Sigmoid colon (tissue), 7 donors: ENCODE measurements at regions of chr5 and their contacts with region 1.

Region 1: DNA sequence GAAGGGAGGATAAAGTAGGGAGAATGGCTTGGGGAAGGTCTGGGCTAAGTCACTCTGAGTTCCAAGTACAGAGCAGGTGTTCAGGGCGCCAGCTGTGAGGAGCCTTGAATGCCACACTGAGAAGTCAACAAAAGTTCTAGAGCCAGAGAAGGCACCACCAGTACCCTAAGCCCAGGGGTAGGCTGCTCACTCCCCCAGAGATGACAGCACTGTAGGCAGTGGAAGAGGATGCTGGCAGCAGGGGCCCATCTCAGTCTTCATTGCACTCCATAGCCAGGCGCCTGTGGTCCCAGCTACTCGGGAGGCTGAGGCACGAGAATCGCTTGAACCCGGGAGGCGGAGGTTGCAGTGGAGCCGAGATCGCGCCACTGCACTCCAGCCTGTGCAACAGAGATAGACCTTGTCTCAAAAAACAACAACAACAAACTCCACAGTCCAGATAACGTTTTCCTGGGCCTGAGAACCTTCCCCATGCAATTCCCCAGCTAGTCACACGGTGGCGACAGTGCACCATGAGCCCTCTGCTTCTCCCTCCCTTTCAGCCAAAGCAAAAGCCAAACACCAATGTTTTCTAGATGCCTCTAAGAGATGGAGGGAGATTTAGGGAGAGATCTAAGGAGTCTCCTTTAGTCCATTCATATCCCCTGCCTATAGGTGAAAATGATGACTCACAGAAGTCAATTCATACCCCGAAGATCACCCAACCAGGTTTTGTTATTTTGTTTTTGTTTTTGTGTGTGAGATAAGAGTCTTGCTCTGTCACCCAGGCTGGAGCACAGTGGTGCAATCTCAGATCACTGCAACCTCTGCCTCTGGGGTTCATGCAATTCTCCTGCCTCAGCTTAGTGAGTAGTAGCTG is 19.8 kb upstream of the NSD1 start:
- DNase-seq: peak; percentile 86
- H3K4me3 ChIP-seq: no peak overlapping the region
- H3K27ac ChIP-seq: no peak overlapping the region
- H3K4me1 ChIP-seq: peaks cover 2 to 20% (median 12%) of the 10 kb centered on the region in 4 donors
- H3K27me3 ChIP-seq: no peaks in the 10 kb centered on the region
- CTCF ChIP-seq: peak; percentile 97 to 98 (median 98)
- EP300 ChIP-seq: no peak
- POLR2A ChIP-seq: no peak

Region 2: DNA sequence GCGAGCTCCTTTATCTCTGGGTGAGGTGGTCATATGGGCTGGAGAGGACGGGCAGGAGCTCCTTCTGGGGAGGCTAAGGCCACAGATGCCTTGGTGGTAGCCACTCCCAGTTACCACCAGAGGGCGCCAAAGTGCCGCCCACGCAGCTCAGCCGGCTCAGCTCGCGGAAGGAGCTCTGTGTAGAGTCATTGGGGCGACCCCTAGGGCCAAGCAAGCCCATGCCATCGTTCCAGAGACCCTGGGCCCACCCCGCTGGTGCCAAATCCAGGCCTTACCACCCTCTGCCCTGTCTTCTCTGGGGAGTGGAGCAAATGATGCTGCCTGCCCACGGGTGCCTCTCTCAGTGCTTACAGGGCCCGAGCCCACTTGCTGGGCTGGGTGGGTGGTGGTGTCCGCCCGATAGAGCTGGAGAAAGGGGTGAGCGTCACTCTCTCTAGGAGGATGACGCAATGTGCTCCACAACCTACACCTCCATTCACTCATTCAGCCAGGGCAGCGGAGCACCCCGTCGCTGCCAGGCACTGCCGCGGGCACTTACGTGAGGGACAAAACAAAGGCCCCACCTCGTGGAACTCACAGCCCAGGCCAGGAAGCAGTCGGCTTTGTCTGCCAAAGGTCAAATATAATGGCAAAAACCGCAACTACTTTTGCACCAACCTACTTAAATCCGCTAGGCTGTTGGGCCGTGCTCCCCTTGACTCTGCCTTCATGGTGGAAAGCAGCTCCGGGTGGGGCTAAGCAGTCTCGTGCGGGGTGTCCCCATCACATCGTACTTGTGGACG is 452.7 kb before region 1 on chr5:
- intact Hi-C with region 1: loop called (anchors 5 kb)
- DNase-seq: peak; percentile 83
- H3K4me3 ChIP-seq: no peak overlapping the region
- H3K27ac ChIP-seq: no peak overlapping the region
- H3K4me1 ChIP-seq: peaks cover 0 to 17% (median 6%) of the 10 kb centered on the region in 4 donors
- H3K27me3 ChIP-seq: peaks cover 0 to 33% (median 16%) of the 10 kb centered on the region in 3 donors
- CTCF ChIP-seq: peak; percentile 50 to 98 (median 80)
- EP300 ChIP-seq: no peak
- POLR2A ChIP-seq: no peak

Region 3: GRCh38 chr5:177071666-177072385 is 42.0 kb before region 1 on chr5:
- intact Hi-C with region 1: loop called (anchors 1 kb)
- DNase-seq: peak; percentile 81
- H3K4me3 ChIP-seq: no peak overlapping the region
- H3K27ac ChIP-seq: no peak overlapping the region
- H3K4me1 ChIP-seq: peaks cover 0 to 3% (median 1%) of the 10 kb centered on the region in 4 donors
- H3K27me3 ChIP-seq: no peaks in the 10 kb centered on the region
- CTCF ChIP-seq: peak; percentile 50 to 93 (median 78)
- EP300 ChIP-seq: no peak
- POLR2A ChIP-seq: no peak

Region 4: GRCh38 chr5:177133091-177133852 is 19.5 kb after region 1 on chr5 and contains the start of gene NSD1:
- intact Hi-C with region 1: loop called (anchors 2 kb)
- DNase-seq: peak; percentile 96
- H3K4me3 ChIP-seq: peak within 1 kb of the TSS; percentile 57 to 86 (median 74)
- H3K27ac ChIP-seq: peak within 1 kb of the TSS; percentile 86 to 95 (median 93)
- H3K4me1 ChIP-seq: peaks cover 0 to 55% (median 47%) of the 10 kb centered on the region in 4 donors
- H3K27me3 ChIP-seq: no peaks in the 10 kb centered on the region
- CTCF ChIP-seq: no peak
- EP300 ChIP-seq: no peak
- POLR2A ChIP-seq: no peak
- total RNA-seq, gene NSD1: 34.6 to 41.5 (median 36.5) TPM

Region 5: DNA sequence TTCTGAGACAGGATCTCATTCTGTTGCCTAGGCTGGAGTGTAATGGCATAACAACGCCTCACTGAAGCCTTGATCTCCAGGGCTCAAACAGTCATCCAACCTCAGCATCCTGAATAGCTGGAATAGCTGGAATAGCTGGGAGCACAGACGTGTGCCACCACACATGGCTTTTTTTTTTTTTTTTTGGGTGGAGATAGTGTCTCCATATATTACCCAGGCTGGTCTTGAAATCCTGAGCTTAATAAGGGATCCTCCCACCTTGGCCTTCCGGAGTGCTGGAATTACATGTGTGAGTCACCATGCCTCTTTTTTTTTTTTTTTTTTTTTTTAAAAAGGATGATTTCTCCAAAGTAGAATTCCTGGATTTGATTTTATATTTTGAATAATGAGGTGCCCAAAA is 80.5 kb after region 1 on chr5:
- intact Hi-C with region 1: loop called (anchors 5 kb)
- DNase-seq: no peak
- H3K4me3 ChIP-seq: no peak overlapping the region
- H3K27ac ChIP-seq: no peak overlapping the region
- H3K4me1 ChIP-seq: peaks cover 0 to 11% (median 4%) of the 10 kb centered on the region in 4 donors
- H3K27me3 ChIP-seq: no peaks in the 10 kb centered on the region
- CTCF ChIP-seq: no peak
- EP300 ChIP-seq: no peak
- POLR2A ChIP-seq: no peak

Region 6: GRCh38 chr5:177232761-177233160 is 119.0 kb after region 1 on chr5:
- intact Hi-C with region 1: loop called (anchors 5 kb)
- DNase-seq: no peak
- H3K4me3 ChIP-seq: no peak overlapping the region
- H3K27ac ChIP-seq: peak overlapping the region in 2 of 4 donors; percentile 49 to 54
- H3K4me1 ChIP-seq: peaks cover 0 to 34% (median 26%) of the 10 kb centered on the region in 4 donors
- H3K27me3 ChIP-seq: no peaks in the 10 kb centered on the region
- CTCF ChIP-seq: no peak
- EP300 ChIP-seq: no peak
- POLR2A ChIP-seq: no peak

Region 7: DNA sequence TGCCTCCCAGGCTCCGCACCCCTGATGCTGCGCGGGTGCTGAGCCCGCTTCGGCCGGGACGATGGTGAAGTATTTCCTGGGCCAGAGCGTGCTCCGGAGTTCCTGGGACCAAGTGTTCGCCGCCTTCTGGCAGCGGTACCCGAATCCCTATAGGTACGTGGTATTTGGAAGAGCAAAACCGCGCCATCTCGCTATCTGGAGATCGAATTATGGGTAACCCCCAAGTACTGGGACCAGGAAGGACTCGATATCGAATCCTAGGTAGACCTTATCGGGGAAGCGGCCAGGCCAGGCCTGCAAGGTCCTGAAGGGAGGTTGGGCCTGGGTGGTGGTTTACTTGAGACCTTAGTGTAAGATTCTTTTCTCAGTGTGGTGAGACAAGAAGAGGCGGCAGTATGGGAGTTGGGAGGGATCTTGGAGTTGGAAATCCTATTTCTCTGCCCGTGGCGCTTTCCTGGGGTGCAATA is 190.2 kb after region 1 on chr5:
- intact Hi-C with region 1: loop called (anchors 2 kb)
- DNase-seq: peak; percentile 68
- H3K4me3 ChIP-seq: peak overlapping the region; percentile 78 to 88 (median 84)
- H3K27ac ChIP-seq: peak overlapping the region; percentile 84 to 90 (median 86)
- H3K4me1 ChIP-seq: peaks cover 0 to 64% (median 48%) of the 10 kb centered on the region in 4 donors
- H3K27me3 ChIP-seq: no peaks in the 10 kb centered on the region
- CTCF ChIP-seq: no peak
- EP300 ChIP-seq: no peak
- POLR2A ChIP-seq: no peak